ENCODE measurements at regions of chr4 and their contacts with region 1.

Region 1: GRCh38 chr4:122508083-122508482 is 51.6 kb upstream of the IL2 start:
- DNase-seq: peak; percentile 70
- H3K4me3 Mint-ChIP-seq: peak overlapping the region; percentile 65
- H3K27ac Mint-ChIP-seq: peak overlapping the region; percentile 82
- H3K4me1 Mint-ChIP-seq: peaks cover 55% of the 10 kb centered on the region
- H3K27me3 Mint-ChIP-seq: no peaks in the 10 kb centered on the region

Region 2: GRCh38 chr4:122552898-122553297 is 44.8 kb after region 1 on chr4:
- intact Hi-C with region 1: loop called (anchors 1 kb)
- DNase-seq: no peak
- H3K4me3 Mint-ChIP-seq: peak overlapping the region; percentile 14
- H3K27ac Mint-ChIP-seq: peak overlapping the region; percentile 78
- H3K4me1 Mint-ChIP-seq: peaks cover 59% of the 10 kb centered on the region
- H3K27me3 Mint-ChIP-seq: no peaks in the 10 kb centered on the region